ENCODE measurements at regions of chr16 and their contacts with region 1.

Region 1: DNA sequence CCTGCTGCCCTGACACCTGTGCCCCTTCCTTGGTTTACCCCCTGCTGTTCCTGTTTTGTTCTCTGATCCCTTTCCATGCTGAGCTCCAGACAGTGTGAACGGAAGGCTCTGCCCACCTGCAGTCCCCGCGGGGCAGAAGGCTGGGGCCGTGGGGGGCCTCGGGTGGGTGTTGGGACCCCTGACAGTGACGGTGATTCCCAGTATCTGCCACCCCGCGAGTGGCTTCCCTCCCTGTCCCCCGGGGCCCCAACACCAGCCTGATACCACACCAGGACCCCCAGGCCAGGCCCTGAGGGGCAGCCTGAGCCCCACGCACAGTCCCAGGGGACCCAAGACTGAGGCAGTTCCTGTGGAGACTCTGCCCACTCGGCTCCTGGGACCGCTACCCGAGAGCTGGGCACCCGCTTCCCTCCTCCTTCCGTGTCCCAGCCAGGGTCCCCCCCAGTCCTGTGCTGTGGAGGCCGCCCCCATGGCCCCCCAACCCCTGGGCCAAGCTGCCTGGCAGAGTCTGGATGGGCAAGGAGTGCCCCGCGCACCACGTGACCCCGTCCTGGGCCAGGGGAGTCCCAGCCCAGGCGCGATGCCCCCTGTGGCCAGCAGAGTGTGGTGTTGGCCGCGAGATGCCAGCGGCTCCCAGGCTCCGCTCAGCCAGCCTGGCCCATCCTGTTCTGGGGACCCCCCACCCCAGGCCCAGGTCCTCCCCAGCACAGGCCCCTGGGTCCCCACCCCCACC is 10.0 kb upstream of the C1QTNF8 start:
- DNase-seq: peak; percentile 67 to 87 (median 84)
- H3K4me3 ChIP-seq: no peak overlapping the region
- H3K27ac ChIP-seq: no peak overlapping the region
- H3K4me1 ChIP-seq: peaks cover 0 to 4% of the 10 kb centered on the region in 2 donors
- H3K27me3 ChIP-seq: peaks cover 12% of the 10 kb centered on the region
- CTCF ChIP-seq: peak; percentile 66 to 97 (median 82)
- POLR2A ChIP-seq: no peak

Region 2: DNA sequence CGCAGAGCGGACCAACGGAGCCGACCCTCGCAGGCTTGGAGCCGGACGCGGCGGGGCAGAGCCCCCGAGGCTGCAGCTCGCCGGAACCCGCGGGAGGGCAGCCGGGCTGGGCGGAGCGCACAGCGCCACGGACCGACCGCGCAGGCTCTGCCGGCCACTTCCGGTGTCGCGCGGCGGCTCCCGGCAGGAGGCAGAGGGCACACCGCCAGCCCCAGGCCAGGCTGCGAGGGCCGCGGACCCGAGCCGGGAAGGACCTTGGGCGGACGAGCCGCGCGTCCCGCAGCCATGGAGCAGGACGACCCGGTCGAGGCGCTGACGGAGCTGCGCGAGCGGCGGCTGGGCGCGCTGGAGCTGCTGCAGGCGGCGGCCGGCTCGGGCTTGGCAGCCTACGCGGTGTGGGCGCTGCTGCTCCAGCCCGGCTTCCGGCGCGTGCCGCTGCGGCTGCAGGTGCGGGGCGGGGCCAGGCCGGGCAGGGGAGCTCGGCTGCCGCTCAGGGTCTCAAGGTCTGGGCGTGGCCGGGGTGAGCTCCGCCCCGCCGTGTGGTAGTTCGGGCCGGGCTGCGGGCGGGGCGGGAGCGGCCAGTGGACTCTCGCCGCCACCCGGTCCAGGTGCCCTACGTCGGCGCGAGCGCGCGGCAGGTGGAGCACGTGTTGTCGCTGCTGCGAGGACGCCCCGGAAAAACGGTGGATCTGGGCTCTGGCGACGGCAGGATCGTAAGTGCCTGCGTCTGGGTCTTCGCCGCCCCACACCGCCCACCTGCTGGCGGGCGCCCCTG is 384.9 kb before region 1 on chr16 and contains the start of gene ANTKMT:
- intact Hi-C with region 1: no loop called
- DNase-seq: peak; percentile 84 to 91 (median 86)
- H3K4me3 ChIP-seq: peak within 1 kb of the TSS; percentile 35 to 88 (median 62)
- H3K27ac ChIP-seq: peak within 1 kb of the TSS; percentile 82 to 95 (median 90)
- H3K4me1 ChIP-seq: peaks cover 17 to 25% of the 10 kb centered on the region in 2 donors
- H3K27me3 ChIP-seq: no peaks in the 10 kb centered on the region
- CTCF ChIP-seq: peak in 3 of 6 experiments; percentile 9 to 19 (median 11)
- POLR2A ChIP-seq: peak; percentile 84 to 89
- total RNA-seq, gene ANTKMT: 36.8 to 127 (median 61.4) TPM

Region 3: GRCh38 chr16:1194665-1195392 is 88.8 kb after region 1 on chr16:
- intact Hi-C with region 1: loop called (anchors 1 to 2 kb)
- DNase-seq: peak; percentile 73 to 85 (median 84)
- H3K4me3 ChIP-seq: peak overlapping the region in 1 of 4 donors; percentile 22
- H3K27ac ChIP-seq: peak overlapping the region in 2 of 5 donors; percentile 67 to 70
- H3K4me1 ChIP-seq: peaks cover 0 to 12% of the 10 kb centered on the region in 2 donors
- H3K27me3 ChIP-seq: no peaks in the 10 kb centered on the region
- CTCF ChIP-seq: peak; percentile 84 to 99 (median 94)
- POLR2A ChIP-seq: no peak